ENCODE measurements at regions of chr7 and their contacts with region 1.

Region 1: DNA sequence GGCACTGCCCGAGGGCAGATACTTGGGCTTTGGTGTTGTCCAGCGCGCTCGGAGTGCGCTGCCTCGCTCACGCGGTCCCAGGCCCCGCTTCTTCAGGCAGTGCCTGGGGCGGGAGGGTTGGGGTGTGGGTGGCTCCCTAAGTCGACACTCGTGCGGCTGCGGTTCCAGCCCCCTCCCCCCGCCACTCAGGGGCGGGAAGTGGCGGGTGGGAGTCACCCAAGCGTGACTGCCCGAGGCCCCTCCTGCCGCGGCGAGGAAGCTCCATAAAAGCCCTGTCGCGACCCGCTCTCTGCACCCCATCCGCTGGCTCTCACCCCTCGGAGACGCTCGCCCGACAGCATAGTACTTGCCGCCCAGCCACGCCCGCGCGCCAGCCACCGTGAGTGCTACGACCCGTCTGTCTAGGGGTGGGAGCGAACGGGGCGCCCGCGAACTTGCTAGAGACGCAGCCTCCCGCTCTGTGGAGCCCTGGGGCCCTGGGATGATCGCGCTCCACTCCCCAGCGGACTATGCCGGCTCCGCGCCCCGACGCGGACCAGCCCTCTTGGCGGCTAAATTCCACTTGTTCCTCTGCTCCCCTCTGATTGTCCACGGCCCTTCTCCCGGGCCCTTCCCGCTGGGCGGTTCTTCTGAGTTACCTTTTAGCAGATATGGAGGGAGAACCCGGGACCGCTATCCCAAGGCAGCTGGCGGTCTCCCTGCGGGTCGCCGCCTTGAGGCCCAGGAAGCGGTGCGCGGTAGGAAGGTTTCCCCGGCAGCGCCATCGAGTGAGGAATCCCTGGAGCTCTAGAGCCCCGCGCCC is at the start of gene NPY:
- DNase-seq: no peak
- ATAC-seq: no peak
- H3K4me3 ChIP-seq: no peak within 1 kb of the TSS
- H3K27ac ChIP-seq: no peak within 1 kb of the TSS
- H3K4me1 ChIP-seq: no peaks in the 10 kb centered on the region
- H3K27me3 ChIP-seq: peaks cover 76% of the 10 kb centered on the region
- CTCF ChIP-seq: no peak
- total RNA-seq, gene NPY: not detected in 2 replicates

Region 2: DNA sequence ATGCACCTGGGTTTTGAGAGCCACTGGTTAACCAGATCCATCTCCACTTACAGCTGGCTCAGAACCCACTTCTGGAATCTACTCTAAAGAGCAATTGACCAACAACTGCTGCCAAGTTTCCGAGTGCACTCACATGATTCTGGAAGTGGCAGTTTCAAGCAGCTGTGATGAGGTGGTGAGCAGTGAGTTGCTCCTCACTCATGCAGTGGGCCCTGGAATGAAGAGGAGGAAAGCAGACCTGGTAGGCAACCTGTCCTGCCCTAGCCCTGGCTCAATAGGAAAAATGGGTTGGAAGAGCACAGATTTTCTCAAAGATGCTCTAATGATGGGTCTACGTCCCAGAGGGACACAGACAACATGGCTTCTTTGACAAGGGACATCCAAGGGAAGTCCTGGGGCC is 70.8 kb before region 1 on chr7:
- CTCF ChIA-PET with region 1: no interaction called
- POLR2A ChIA-PET with region 1: interaction called, 15 read pairs
- intact Hi-C with region 1: no loop called
- DNase-seq: no peak
- ATAC-seq: no peak
- H3K4me3 ChIP-seq: no peak overlapping the region
- H3K27ac ChIP-seq: no peak overlapping the region
- H3K4me1 ChIP-seq: no peaks in the 10 kb centered on the region
- H3K27me3 ChIP-seq: peaks cover under 1% of the 10 kb centered on the region; the same call in 1 of the 2 replicates
- CTCF ChIP-seq: no peak

Measured in PC-3 (cell line).